Naive thymus-derived CD4-positive, alpha-beta T cell (primary cell): ENCODE measurements at regions of chr17 and their contacts with region 1.

Region 1: DNA sequence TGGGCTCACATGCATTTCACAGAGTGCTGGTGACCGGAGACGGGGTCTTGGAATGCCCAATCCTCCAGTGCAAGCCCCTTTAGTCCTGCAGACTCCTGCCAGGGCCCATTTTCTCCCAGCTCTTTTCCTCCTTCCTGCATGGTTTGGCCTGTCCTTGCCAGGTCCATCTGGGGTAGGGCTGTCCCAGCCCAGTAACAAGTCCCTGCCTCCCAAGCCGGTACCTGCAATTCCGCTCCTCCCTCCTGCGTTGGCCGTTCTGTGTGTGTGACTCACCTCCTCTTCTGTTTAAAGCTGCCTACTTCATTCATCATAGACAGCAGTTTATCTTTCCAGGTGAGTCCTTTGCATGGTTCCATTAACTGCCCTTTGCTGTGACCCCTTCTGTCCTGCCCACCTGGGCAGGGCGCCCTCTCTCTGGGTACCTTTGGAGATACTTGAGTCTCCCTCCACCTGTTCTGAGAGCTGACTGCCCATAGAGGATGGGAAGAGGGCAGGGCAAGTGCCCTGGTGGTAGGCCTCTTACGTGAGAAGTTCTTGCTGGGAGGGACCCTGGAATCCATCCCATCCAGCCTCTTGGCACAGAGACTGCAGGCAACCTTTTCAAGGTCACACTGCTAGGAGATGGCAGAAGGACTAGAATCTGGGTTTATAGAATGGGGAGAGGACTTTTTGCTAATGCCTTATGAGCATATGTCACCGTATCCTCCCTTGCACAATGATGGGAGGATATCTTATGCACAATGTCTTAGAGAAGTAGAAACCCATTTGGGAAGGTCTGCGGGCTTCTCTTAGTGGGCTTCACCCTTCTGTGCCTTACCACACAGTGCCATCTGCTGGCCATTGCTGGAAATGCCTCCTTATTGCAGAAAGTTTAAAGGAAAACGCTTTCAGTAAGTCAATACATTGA is 29.7 kb upstream of the LGALS9 start:
- DNase-seq: peak; percentile 53 to 81 (median 68)
- ATAC-seq: peak; percentile 75
- H3K4me3 ChIP-seq: no peak overlapping the region
- H3K4me3 Mint-ChIP-seq: no peak overlapping the region
- H3K27ac ChIP-seq: no peak overlapping the region
- H3K27ac Mint-ChIP-seq: no peak overlapping the region
- H3K4me1 ChIP-seq: no peaks in the 10 kb centered on the region
- H3K4me1 Mint-ChIP-seq: peaks cover 0 to 22% (median 3%) of the 10 kb centered on the region in 7 donors
- H3K27me3 ChIP-seq: no peaks in the 10 kb centered on the region
- H3K27me3 Mint-ChIP-seq: no peaks in the 10 kb centered on the region

Region 2: DNA sequence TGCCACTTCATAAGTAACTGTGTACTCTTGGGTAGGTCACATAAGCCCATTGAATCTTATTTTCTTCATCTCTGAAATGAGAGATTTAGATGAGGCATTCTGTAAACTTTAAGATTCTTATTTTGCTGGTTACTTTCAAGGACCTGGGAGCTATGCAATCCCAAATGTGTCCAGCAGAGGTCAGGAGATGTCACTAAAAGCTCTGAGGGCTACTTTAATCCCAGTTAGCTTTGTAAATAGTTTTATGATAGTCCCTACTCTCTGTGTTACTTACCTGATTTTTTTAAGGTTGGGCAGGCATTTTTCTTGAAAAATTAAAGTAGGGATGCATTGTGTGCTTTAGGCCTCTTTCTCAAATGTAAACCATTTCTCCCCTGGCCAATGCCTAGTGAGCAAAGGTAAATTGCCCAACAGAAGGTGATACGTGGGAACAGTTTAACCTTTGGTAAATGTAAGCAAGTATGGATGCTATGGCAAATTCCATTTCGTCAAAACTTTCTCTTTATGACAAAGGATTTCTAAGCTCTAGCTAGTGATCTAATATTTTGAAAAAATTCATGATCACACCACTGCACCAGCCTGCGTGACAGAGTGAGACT is 364.5 kb before region 1 on chr17:
- CTCF ChIA-PET with region 1: interaction called, 178 read pairs
- POLR2A ChIA-PET with region 1: interaction called, 3 read pairs
- intact Hi-C with region 1: loop called (anchors 1 kb)
- DNase-seq: peak; percentile 30 to 69 (median 58)
- ATAC-seq: peak; percentile 87
- H3K4me3 ChIP-seq: no peak overlapping the region
- H3K4me3 Mint-ChIP-seq: no peak overlapping the region
- H3K27ac ChIP-seq: no peak overlapping the region
- H3K27ac Mint-ChIP-seq: no peak overlapping the region
- H3K4me1 ChIP-seq: no peaks in the 10 kb centered on the region
- H3K4me1 Mint-ChIP-seq: peaks cover 0 to 19% (median 0%) of the 10 kb centered on the region in 7 donors
- H3K27me3 ChIP-seq: no peaks in the 10 kb centered on the region
- H3K27me3 Mint-ChIP-seq: peaks cover 0 to 19% (median 0%) of the 10 kb centered on the region in 5 donors

Region 3: DNA sequence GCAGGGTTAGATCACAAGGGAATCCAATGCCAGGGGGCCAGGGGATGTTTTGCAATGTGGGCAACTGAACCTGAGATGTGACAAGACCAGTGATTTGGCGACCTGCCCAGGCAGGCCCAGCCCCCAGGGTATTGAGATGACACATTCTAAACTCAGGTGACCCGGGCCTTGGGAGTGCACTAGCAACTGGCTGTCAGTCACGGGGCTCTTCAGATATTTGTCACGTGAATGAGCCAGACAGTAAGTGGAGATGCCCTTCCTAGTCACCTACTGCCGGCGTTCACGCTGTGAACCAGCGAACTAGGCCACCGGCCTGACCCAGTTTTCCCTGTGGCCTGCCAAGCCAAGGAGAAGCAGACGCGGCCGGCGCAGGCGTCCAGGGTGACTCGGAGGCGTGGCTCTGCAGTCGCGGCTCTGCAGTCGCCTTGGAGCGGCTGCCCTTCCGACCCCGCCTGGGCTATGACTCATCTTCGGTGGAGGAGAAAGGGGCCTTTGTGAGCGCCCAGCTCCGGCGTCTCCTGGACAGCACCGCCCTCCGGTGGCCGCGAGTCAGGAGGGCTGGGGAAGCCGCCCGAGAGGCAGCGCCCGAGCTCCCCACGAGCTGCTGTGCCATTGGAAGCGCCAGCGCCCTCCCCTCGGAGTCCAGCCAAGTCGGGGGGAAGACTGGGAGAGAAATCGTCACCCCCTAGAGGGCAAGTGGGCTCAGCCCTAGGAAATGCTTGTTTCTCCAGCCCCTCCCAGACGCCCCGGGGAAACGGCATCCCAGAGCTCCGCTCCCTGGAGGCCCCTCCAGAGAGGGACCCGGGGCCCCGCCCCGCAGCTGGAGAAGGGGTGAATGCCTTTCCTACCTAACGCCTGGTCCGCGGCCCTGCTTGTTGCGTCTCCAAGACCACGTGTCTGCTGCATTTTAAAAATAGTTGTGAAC is 268.6 kb before region 1 on chr17:
- CTCF ChIA-PET with region 1: interaction called, 4 read pairs
- POLR2A ChIA-PET with region 1: no interaction called
- intact Hi-C with region 1: loop called in 1 of 2 experiments (anchors 1 kb)
- DNase-seq: peak; percentile 49 to 90 (median 71)
- ATAC-seq: peak; percentile 94
- H3K4me3 ChIP-seq: peak overlapping the region; percentile 72
- H3K4me3 Mint-ChIP-seq: peak overlapping the region; percentile 75 to 90 (median 86)
- H3K27ac ChIP-seq: peak overlapping the region; percentile 23
- H3K27ac Mint-ChIP-seq: peak overlapping the region in 8 of 9 donors; percentile 43 to 92 (median 80)
- H3K4me1 ChIP-seq: peaks cover 6 to 10% of the 10 kb centered on the region in 2 donors
- H3K4me1 Mint-ChIP-seq: peaks cover 6 to 25% (median 18%) of the 10 kb centered on the region in 7 donors
- H3K27me3 ChIP-seq: no peaks in the 10 kb centered on the region
- H3K27me3 Mint-ChIP-seq: peaks cover 0 to 3% (median 0%) of the 10 kb centered on the region in 5 donors

Region 4: GRCh38 chr17:27381007-27381501 is 220.3 kb before region 1 on chr17:
- CTCF ChIA-PET with region 1: interaction called, 4 read pairs
- POLR2A ChIA-PET with region 1: no interaction called
- intact Hi-C with region 1: loop called (anchors 1 to 2 kb)
- DNase-seq: peak; percentile 31 to 87 (median 53)
- ATAC-seq: peak; percentile 94
- H3K4me3 ChIP-seq: no peak overlapping the region
- H3K4me3 Mint-ChIP-seq: no peak overlapping the region
- H3K27ac ChIP-seq: no peak overlapping the region
- H3K27ac Mint-ChIP-seq: no peak overlapping the region
- H3K4me1 ChIP-seq: no peaks in the 10 kb centered on the region
- H3K4me1 Mint-ChIP-seq: peaks cover 0 to 7% (median 0%) of the 10 kb centered on the region in 7 donors
- H3K27me3 ChIP-seq: peaks cover 0 to 4% of the 10 kb centered on the region in 2 donors
- H3K27me3 Mint-ChIP-seq: peaks cover 12 to 28% (median 24%) of the 10 kb centered on the region in 5 donors

Region 5: DNA sequence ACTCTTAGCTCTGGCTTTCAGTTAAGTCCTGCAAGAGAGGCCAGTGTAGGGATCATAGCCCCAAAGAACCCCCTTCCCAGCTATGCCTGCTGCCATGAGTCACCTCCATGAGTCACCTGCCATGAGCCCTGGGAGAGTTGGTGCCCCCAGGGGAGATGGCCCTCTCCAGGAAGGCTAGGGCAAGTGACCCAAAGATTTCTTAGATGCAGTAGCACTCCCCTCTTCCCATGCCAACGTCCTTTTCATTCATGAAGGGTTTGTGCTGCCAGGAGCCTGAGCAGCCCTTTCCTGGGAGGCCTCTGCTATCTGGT is 48.9 kb before region 1 on chr17:
- CTCF ChIA-PET with region 1: no interaction called
- POLR2A ChIA-PET with region 1: no interaction called
- intact Hi-C with region 1: no loop called
- DNase-seq: no peak
- ATAC-seq: peak; percentile 16
- H3K4me3 ChIP-seq: no peak overlapping the region
- H3K4me3 Mint-ChIP-seq: no peak overlapping the region
- H3K27ac ChIP-seq: no peak overlapping the region
- H3K27ac Mint-ChIP-seq: no peak overlapping the region
- H3K4me1 ChIP-seq: no peaks in the 10 kb centered on the region
- H3K4me1 Mint-ChIP-seq: peaks cover 5 to 35% (median 6%) of the 10 kb centered on the region in 7 donors
- H3K27me3 ChIP-seq: no peaks in the 10 kb centered on the region
- H3K27me3 Mint-ChIP-seq: no peaks in the 10 kb centered on the region

Region 6: DNA sequence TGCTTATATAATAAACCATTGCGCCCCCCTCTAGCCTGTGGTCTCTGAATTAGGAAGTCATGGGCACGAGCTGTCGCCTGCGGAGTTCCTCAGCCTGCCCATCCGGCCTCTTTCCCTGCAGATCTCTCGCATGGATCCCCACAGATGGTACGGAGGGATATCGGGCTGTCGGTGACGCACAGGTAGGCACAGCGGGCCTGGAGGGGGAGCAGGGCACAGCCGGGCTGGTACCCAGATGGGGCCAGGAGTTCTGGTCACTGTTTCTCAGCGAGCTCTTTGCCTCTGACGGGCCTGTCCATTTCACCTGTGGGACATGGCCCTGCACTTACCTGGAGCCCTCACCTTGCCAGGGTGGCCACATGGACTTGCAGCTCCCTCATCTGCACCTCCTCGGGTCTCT is 13.0 kb before region 1 on chr17:
- CTCF ChIA-PET with region 1: interaction called, 11 read pairs
- POLR2A ChIA-PET with region 1: no interaction called
- intact Hi-C with region 1: no loop called
- DNase-seq: no peak
- ATAC-seq: no peak
- H3K4me3 ChIP-seq: no peak overlapping the region
- H3K4me3 Mint-ChIP-seq: no peak overlapping the region
- H3K27ac ChIP-seq: no peak overlapping the region
- H3K27ac Mint-ChIP-seq: no peak overlapping the region
- H3K4me1 ChIP-seq: no peaks in the 10 kb centered on the region
- H3K4me1 Mint-ChIP-seq: peaks cover 0 to 3% (median 0%) of the 10 kb centered on the region in 7 donors
- H3K27me3 ChIP-seq: no peaks in the 10 kb centered on the region
- H3K27me3 Mint-ChIP-seq: no peaks in the 10 kb centered on the region

Region 7: GRCh38 chr17:27654654-27655524 is 53.6 kb after region 1 on chr17:
- CTCF ChIA-PET with region 1: interaction called, 50 read pairs
- POLR2A ChIA-PET with region 1: interaction called, 3 read pairs
- intact Hi-C with region 1: loop called (anchors 1 kb)
- DNase-seq: peak; percentile 22 to 74 (median 45)
- ATAC-seq: peak; percentile 75
- H3K4me3 ChIP-seq: no peak overlapping the region
- H3K4me3 Mint-ChIP-seq: peak overlapping the region in 1 of 10 donors; percentile 0
- H3K27ac ChIP-seq: no peak overlapping the region
- H3K27ac Mint-ChIP-seq: peak overlapping the region in 1 of 9 donors; percentile 43
- H3K4me1 ChIP-seq: no peaks in the 10 kb centered on the region
- H3K4me1 Mint-ChIP-seq: peaks cover 3 to 10% (median 8%) of the 10 kb centered on the region in 7 donors
- H3K27me3 ChIP-seq: no peaks in the 10 kb centered on the region
- H3K27me3 Mint-ChIP-seq: peaks cover 0 to 13% (median 0%) of the 10 kb centered on the region in 5 donors